ENCODE measurements at regions of chr12 and their contacts with region 1.

Region 1: DNA sequence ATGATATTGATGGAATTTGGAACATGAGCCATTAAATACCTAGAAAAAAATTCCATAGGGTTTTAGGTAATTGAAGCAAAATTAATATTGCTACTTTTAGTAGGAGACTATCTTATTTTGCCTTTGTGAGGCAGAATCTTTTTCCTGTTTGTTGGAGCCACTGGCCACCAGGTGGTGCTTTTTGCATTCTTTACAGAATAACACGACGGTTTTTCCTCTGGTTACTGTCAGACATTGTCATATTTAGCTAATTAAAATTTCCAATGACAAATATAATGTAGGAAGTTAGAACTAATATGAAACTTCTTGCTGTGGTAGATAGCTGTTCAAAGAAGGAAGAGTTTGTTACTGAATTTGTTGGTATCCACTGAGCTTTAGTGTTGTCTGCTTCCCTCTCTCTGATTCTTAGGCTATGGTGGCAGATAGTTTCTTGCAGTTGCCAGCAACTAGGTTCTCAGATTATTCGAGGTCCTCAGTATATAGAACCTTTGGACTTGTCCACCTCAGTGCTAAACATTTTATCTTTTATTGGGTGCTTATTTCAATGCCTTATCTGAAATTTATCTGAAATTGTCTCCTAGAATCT is 25.7 kb downstream of the RAB21 start:
- DNase-seq: peak in 4 of 5 donors; percentile 26 to 29 (median 27)
- ATAC-seq: peak in 2 of 4 donors; percentile 54 to 62
- H3K4me3 ChIP-seq: no peak overlapping the region
- H3K27ac ChIP-seq: no peak overlapping the region
- H3K4me1 ChIP-seq: peaks cover 0 to 21% (median 9%) of the 10 kb centered on the region in 12 donors
- H3K27me3 ChIP-seq: no peaks in the 10 kb centered on the region
- CTCF ChIP-seq: peak; percentile 51 to 80 (median 68)
- POLR2A ChIP-seq: no peak

Region 2: GRCh38 chr12:71840231-71840847 is 60.0 kb after region 1 on chr12:
- intact Hi-C with region 1: loop called in 5 of 10 experiments (anchors 5 to 10 kb)
- DNase-seq: no peak
- ATAC-seq: peak in 3 of 4 donors; percentile 5 to 51 (median 14)
- H3K4me3 ChIP-seq: peak overlapping the region; percentile 53 to 94 (median 74)
- H3K27ac ChIP-seq: peak overlapping the region; percentile 83 to 99 (median 91)
- H3K4me1 ChIP-seq: peaks cover 2 to 50% (median 34%) of the 10 kb centered on the region in 12 donors
- H3K27me3 ChIP-seq: no peaks in the 10 kb centered on the region
- CTCF ChIP-seq: no peak
- POLR2A ChIP-seq: no peak

Region 3: GRCh38 chr12:71846322-71846940 is 66.1 kb after region 1 on chr12:
- intact Hi-C with region 1: loop called in 6 of 10 experiments (anchors 2 to 10 kb)
- DNase-seq: no peak
- ATAC-seq: peak in 2 of 4 donors; percentile 38 to 49
- H3K4me3 ChIP-seq: no peak overlapping the region
- H3K27ac ChIP-seq: peak overlapping the region in 1 of 12 donors; percentile 3
- H3K4me1 ChIP-seq: peaks cover 0 to 70% (median 49%) of the 10 kb centered on the region in 12 donors
- H3K27me3 ChIP-seq: no peaks in the 10 kb centered on the region
- CTCF ChIP-seq: peak; percentile 18 to 66 (median 46)
- POLR2A ChIP-seq: no peak

Region 4: GRCh38 chr12:71854594-71854993 is 74.3 kb after region 1 on chr12:
- intact Hi-C with region 1: loop called in 4 of 10 experiments (anchors 5 to 10 kb)
- DNase-seq: no peak
- ATAC-seq: no peak
- H3K4me3 ChIP-seq: no peak overlapping the region
- H3K27ac ChIP-seq: no peak overlapping the region
- H3K4me1 ChIP-seq: peaks cover 0 to 12% (median 3%) of the 10 kb centered on the region in 12 donors
- H3K27me3 ChIP-seq: no peaks in the 10 kb centered on the region
- CTCF ChIP-seq: no peak
- POLR2A ChIP-seq: no peak

Region 5: GRCh38 chr12:71900091-71900490 is 119.8 kb after region 1 on chr12:
- intact Hi-C with region 1: loop called in 5 of 10 experiments (anchors 10 kb)
- DNase-seq: no peak
- ATAC-seq: no peak
- H3K4me3 ChIP-seq: no peak overlapping the region
- H3K27ac ChIP-seq: no peak overlapping the region
- H3K4me1 ChIP-seq: peaks cover 0 to 9% (median 0%) of the 10 kb centered on the region in 12 donors
- H3K27me3 ChIP-seq: no peaks in the 10 kb centered on the region
- CTCF ChIP-seq: peak in 6 of 12 donors; percentile 9 to 34 (median 23)
- POLR2A ChIP-seq: no peak

Measured in heart left ventricle (tissue), 16 donors.